ENCODE measurements at regions of chr2 and their contacts with region 1.

Region 1: DNA sequence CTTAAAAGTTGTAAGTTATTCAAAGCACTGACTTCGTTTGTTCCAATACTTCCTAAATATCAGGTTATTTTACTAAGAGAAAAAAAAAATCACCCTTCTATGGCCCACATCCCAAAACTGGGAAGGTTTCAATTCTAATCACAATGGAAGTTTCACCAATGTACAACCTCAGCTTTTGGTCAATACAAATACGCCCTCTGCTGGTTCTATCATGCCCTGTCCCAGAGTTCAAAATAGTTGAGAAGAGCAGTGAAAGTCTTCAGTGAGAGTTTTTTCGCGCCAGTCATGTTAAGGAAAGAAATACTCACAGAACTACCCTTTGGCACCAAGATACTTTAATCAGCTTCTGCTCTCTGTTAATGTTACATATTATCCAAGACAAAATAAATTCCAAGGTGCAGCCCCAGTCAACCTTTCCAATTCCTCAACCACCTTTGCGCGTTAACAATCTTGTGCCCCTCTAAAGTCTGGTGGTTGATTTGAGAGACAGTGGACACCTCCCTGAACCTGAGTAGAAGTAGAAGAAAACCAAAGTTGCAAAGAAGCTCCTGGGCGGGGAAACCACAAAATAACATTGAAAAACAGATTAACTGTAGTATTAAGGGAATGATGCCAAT is 59.9 kb downstream of the SUMO1 start:
- DNase-seq: peak in 1 of 3 donors; percentile 58
- ATAC-seq: peak; percentile 90 to 92 (median 91)
- H3K4me3 ChIP-seq: no peak overlapping the region
- H3K27ac ChIP-seq: no peak overlapping the region
- H3K4me1 ChIP-seq: no peaks in the 10 kb centered on the region
- H3K27me3 ChIP-seq: no peaks in the 10 kb centered on the region
- CTCF ChIP-seq: peak; percentile 83 to 87 (median 84)
- POLR2A ChIP-seq: no peak

Region 2: DNA sequence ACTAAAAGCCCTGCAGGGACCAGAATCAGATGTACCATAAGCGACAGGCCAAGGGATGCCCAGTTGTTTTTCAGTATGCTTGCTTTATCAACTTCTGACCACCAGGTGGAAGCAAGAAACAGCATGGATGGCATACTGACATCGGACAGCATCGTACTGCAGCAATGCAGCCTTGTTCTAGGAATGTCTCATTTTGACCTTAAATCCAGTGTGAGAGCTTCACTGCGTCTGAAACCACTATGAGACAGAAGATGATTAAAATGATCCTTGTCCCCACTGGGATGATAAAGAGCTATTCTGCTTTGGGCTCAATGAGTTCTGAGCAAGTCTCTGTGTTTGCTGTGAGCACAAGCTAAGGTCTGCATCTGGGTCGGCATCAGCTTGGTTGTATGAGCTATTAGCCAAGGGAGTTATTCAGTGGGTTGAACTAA is 317.8 kb before region 1 on chr2:
- intact Hi-C with region 1: loop called (anchors 5 kb)
- DNase-seq: peak in 1 of 3 donors; percentile 50
- ATAC-seq: peak; percentile 92 to 97 (median 96)
- H3K4me3 ChIP-seq: no peak overlapping the region
- H3K27ac ChIP-seq: no peak overlapping the region
- H3K4me1 ChIP-seq: no peaks in the 10 kb centered on the region
- H3K27me3 ChIP-seq: no peaks in the 10 kb centered on the region
- CTCF ChIP-seq: peak; percentile 71 to 81 (median 80)
- POLR2A ChIP-seq: no peak

Region 3: DNA sequence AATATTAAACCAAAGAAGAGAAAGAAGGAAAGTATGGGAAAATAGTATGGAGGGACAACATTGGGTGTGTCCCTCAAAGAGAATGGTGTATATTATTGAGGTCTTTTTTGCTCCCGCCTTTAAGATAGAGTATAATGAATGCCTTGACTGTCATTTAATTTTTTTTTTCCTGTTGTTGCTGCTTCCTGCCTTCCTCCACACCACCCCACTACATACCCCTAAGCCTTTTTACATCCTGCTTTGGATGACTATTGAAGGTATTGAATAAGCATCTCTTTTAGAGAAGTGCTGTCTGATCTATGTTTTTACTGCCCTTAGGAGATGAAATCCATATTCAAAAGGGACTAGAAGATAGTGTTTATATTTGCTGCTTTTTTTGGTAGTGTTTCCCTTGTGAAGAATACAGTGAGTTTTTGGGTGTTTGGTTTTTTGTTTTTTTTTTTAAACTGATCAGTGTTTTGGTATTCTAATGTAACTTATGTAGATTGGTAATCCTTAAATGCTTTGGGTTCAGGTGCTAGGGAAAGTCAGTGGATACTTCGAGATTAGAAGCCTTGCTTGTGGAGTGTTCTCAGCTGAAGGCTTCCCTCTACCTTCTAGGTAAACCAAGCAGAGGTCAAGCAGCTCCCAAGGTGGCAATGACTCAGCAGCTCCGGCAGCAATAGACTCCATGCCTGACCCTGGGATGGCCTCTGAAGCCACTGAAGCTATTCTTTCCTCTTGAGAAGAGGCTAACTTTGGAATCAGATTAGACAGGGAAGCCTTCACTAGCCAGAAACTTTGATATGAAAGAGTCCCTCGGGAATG is 139.8 kb before region 1 on chr2:
- intact Hi-C with region 1: no loop called
- DNase-seq: no peak
- ATAC-seq: no peak
- H3K4me3 ChIP-seq: no peak overlapping the region
- H3K27ac ChIP-seq: no peak overlapping the region
- H3K4me1 ChIP-seq: peaks cover 0 to 14% (median 0%) of the 10 kb centered on the region in 4 donors
- H3K27me3 ChIP-seq: peaks cover 0 to 15% of the 10 kb centered on the region in 2 donors
- CTCF ChIP-seq: no peak
- POLR2A ChIP-seq: no peak